K562 (cell line): ENCODE measurements at regions of chr5 and their contacts with region 1.

Region 1: DNA sequence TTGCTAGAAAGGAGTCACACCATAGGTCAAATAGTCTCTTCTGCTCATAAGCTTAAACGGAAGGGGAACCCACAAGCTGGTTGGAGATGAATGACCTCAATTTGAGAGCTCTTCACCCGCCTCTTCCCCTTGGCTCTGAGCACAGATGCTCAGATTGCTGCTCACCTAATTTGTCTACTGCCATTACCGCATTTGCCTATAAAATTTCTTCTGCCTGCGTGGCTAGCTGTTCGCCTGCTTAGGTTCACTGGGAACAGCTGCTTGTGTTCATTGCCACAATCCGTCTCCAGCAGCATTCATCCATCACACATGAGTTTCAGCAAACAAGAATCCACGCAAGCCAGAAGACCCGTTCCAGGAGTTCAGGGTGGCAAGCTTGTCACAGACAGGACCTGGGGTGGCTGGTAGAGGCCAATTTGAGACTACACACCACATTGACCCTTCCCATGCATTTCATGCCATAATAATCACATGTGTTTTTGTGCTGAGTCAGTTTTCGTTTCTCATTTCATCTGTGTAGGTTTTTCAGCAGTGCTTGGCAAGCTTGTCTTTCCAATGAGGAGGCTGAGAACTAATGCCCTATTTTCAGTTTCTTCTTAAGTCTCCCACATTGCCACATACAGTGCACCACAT is 50.2 kb upstream of the DNAH5 start:
- DNase-seq: no peak
- ATAC-seq: no peak
- H3K4me3 ChIP-seq: no peak overlapping the region
- H3K27ac ChIP-seq: no peak overlapping the region
- H3K4me1 ChIP-seq: no peaks in the 10 kb centered on the region
- H3K27me3 ChIP-seq: peaks cover 5% of the 10 kb centered on the region in 2 experiments; a peak in 2 of 5 replicates
- CTCF ChIP-seq: no peak
- EP300 ChIP-seq: no peak
- POLR2A ChIP-seq: no peak
- RAD21 ChIP-seq: no peak

Region 2: GRCh38 chr5:14081791-14082190 is 87.1 kb after region 1 on chr5:
- CTCF ChIA-PET with region 1: no interaction called
- POLR2A ChIA-PET with region 1: no interaction called
- in situ Hi-C with region 1: no loop called
- intact Hi-C with region 1: loop called (anchors 10 kb)
- DNase-seq: no peak
- ATAC-seq: no peak
- H3K4me3 ChIP-seq: no peak overlapping the region
- H3K27ac ChIP-seq: no peak overlapping the region
- H3K4me1 ChIP-seq: no peaks in the 10 kb centered on the region
- H3K27me3 ChIP-seq: peaks cover under 1 to 13% of the 10 kb centered on the region in 2 experiments; a peak in 3 of 5 replicates
- CTCF ChIP-seq: no peak
- EP300 ChIP-seq: no peak
- POLR2A ChIP-seq: no peak
- RAD21 ChIP-seq: no peak

Region 3: DNA sequence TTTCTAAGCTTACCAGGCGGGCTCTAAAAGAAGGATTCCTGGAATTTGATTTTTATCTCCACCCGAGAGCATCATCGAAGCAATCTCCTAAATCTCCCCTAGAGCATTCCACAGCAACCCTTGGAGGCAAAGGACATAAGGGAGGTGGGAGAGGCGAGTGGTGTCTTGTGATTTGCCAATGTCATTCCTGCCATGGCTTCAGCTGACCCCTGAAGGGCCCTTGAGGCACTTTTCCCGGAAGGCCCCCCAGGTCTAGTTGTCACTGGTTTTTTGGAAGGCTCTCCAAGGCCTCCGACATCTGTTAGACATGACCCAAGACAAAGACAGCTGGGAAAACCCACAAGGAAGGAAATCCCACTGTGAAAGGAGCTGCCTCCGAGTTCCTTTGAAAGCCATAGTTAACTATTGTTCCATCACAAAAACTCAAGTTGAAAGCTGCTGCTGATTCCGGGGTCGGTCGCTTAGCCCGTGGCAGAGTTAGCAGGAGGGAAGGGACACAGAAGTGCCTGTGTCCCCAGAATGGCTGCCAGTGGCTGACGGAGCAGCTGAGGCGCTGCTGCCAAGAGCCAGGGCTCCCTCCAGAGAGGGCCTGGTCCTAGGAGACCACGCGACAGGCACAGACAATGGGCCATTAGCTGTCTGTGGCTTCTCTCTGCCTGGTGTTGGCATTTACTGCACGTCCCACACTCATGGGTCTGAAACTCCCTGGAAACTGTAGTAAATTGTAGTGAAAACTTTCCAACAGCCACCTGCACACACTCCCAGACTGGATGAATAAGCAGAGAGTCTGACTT is 124.0 kb after region 1 on chr5:
- CTCF ChIA-PET with region 1: no interaction called
- POLR2A ChIA-PET with region 1: no interaction called
- in situ Hi-C with region 1: no loop called
- intact Hi-C with region 1: no loop called
- DNase-seq: no peak
- ATAC-seq: no peak; the same call in 2 of the 3 replicates
- H3K4me3 ChIP-seq: no peak overlapping the region
- H3K27ac ChIP-seq: no peak overlapping the region
- H3K4me1 ChIP-seq: no peaks in the 10 kb centered on the region
- H3K27me3 ChIP-seq: peaks cover 0 to 9% of the 10 kb centered on the region in 2 experiments; a peak in 1 of 5 replicates
- CTCF ChIP-seq: no peak
- EP300 ChIP-seq: no peak
- POLR2A ChIP-seq: no peak
- RAD21 ChIP-seq: no peak